Transverse colon (tissue), 4 donors: ENCODE measurements at regions of chr1 and their contacts with region 1.

Region 1: DNA sequence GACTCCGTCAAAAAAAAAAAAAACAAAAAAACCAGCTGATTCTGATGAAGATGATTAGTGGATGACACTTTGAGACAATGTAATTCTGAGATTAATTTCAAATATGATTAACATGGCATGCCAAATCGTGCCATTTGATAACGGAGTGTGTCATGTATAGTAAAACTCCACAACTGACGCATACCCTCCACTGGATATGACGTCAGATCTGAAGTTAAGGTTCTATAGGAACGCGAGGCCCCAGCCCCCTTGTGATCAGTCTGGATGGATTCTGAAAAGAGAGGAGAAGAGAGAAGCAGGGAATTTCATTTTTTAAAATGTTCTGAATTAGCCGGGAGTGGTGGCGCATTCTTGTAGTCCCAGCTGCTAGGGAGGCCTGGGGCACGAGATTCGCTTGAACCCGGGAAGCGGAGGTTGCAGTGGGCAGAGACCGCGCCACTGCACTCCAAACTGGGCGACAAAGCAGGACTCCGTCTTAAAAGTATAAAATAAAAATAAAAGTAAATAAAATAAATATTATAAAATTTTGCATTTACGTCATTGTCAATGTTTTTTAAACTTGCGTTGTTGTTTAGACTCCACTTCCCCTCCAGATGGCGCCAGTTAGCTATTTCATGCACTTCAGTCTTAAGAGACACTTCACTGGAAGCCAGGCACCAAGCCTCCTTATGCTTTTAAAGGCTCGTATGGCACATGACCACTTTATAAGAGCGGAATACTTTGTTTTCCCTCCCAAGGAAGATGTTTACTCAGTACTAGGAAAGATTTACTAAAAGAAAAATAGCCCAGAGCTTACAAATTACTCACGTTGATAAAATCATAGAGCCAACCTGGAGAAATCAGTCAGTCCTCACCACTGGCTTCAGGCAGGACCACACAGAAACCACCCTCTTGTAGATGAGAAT is 65.5 kb downstream of the UBE2U start:
- DNase-seq: peak; percentile 69
- H3K4me3 ChIP-seq: peak overlapping the region in 2 of 4 donors; percentile 12 to 17
- H3K27ac ChIP-seq: no peak overlapping the region
- H3K4me1 ChIP-seq: peaks cover 0 to 6% (median 0%) of the 10 kb centered on the region in 4 donors
- H3K27me3 ChIP-seq: no peaks in the 10 kb centered on the region
- CTCF ChIP-seq: peak; percentile 71 to 84 (median 78)
- EP300 ChIP-seq: no peak
- POLR2A ChIP-seq: no peak

Region 2: GRCh38 chr1:64006276-64007051 is 262.4 kb before region 1 on chr1:
- in situ Hi-C with region 1: no loop called
- intact Hi-C with region 1: no loop called
- DNase-seq: no peak
- H3K4me3 ChIP-seq: no peak overlapping the region
- H3K27ac ChIP-seq: no peak overlapping the region
- H3K4me1 ChIP-seq: peaks cover 0 to 6% (median 0%) of the 10 kb centered on the region in 4 donors
- H3K27me3 ChIP-seq: no peaks in the 10 kb centered on the region
- CTCF ChIP-seq: no peak
- EP300 ChIP-seq: no peak
- POLR2A ChIP-seq: no peak

Region 3: GRCh38 chr1:64663668-64664067 is 394.8 kb after region 1 on chr1:
- in situ Hi-C with region 1: loop called in 1 of 4 experiments (anchors 25 kb)
- intact Hi-C with region 1: no loop called
- DNase-seq: no peak
- H3K4me3 ChIP-seq: no peak overlapping the region
- H3K27ac ChIP-seq: no peak overlapping the region
- H3K4me1 ChIP-seq: no peaks in the 10 kb centered on the region
- H3K27me3 ChIP-seq: no peaks in the 10 kb centered on the region
- CTCF ChIP-seq: no peak
- EP300 ChIP-seq: no peak
- POLR2A ChIP-seq: no peak

Region 4: GRCh38 chr1:64675718-64676345 is 406.9 kb after region 1 on chr1:
- in situ Hi-C with region 1: loop called (anchors 10 to 25 kb)
- intact Hi-C with region 1: loop called (anchors 5 kb)
- DNase-seq: no peak
- H3K4me3 ChIP-seq: no peak overlapping the region
- H3K27ac ChIP-seq: no peak overlapping the region
- H3K4me1 ChIP-seq: no peaks in the 10 kb centered on the region
- H3K27me3 ChIP-seq: no peaks in the 10 kb centered on the region
- CTCF ChIP-seq: peak; percentile 32 to 69 (median 60)
- EP300 ChIP-seq: no peak
- POLR2A ChIP-seq: no peak

Region 5: GRCh38 chr1:64686828-64687724 is 418.2 kb after region 1 on chr1:
- in situ Hi-C with region 1: loop called in 2 of 4 experiments (anchors 25 kb)
- intact Hi-C with region 1: no loop called
- DNase-seq: peak; percentile 22
- H3K4me3 ChIP-seq: no peak overlapping the region
- H3K27ac ChIP-seq: no peak overlapping the region
- H3K4me1 ChIP-seq: peaks cover 0 to 12% (median 8%) of the 10 kb centered on the region in 4 donors
- H3K27me3 ChIP-seq: no peaks in the 10 kb centered on the region
- CTCF ChIP-seq: peak; percentile 78 to 93 (median 87)
- EP300 ChIP-seq: no peak
- POLR2A ChIP-seq: no peak

Region 6: DNA sequence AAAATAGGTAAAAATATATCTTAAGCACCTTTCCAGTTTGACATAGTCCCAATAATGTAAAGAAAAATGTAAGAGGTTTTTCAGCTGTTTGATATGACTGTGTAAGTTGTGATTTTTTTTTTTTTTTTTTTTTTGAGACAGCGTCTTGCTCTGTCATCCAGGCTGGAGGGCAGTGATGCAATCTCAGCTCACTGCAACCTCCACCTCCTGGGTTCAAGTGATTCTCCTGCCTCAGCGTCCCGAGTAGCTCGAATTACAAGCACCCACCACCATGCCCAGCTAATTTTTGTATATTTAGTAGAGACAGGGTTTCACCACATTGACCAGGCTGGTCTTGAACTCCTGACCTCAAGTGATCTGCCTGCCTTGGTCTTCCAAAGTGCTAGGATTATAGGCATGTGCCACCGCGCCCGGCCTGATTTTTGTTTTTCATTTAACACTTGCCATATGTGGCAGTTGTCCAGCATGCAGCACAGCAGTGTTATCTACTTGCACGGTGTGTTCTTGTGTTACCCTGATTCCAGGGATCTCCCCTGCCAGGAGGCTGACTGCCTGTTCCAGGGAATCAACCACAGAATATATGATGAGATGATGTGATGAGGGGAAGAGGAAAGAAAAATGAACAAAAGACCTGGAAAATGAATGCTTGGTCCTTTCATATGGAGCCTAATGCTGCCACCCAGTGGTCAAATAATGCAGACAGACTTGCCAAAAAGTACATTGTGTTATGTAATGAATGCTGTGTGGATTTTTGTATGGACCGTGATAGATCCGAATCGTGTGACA is 555.0 kb after region 1 on chr1:
- in situ Hi-C with region 1: loop called (anchors 10 to 25 kb)
- intact Hi-C with region 1: loop called (anchors 5 kb)
- DNase-seq: peak; percentile 76
- H3K4me3 ChIP-seq: no peak overlapping the region
- H3K27ac ChIP-seq: no peak overlapping the region
- H3K4me1 ChIP-seq: peaks cover 0 to 14% (median 2%) of the 10 kb centered on the region in 4 donors
- H3K27me3 ChIP-seq: no peaks in the 10 kb centered on the region
- CTCF ChIP-seq: peak; percentile 77 to 90 (median 82)
- EP300 ChIP-seq: no peak
- POLR2A ChIP-seq: no peak